ENCODE measurements at regions of chr20 and their contacts with region 1.

Region 1: GRCh38 chr20:48875911-48876640 is 45.4 kb upstream of the ARFGEF2 start:
- DNase-seq: no peak
- CTCF ChIP-seq: no peak

Region 2: GRCh38 chr20:48850257-48850975 is 25.7 kb before region 1 on chr20:
- CTCF ChIA-PET with region 1: no interaction called
- POLR2A ChIA-PET with region 1: no interaction called
- DNase-seq: no peak
- CTCF ChIP-seq: no peak

Region 3: GRCh38 chr20:48892844-48893243 is 16.8 kb after region 1 on chr20:
- CTCF ChIA-PET with region 1: interaction called, 14 read pairs
- POLR2A ChIA-PET with region 1: no interaction called
- DNase-seq: no peak
- CTCF ChIP-seq: no peak